GM12878 (cell line): ENCODE measurements at regions of chr10 and their contacts with region 1.

Region 1: GRCh38 chr10:93376372-93377293 is 105.5 kb downstream of the MYOF start:
- DNase-seq: peak; percentile 31
- ATAC-seq: peak; percentile 93
- H3K4me3 ChIP-seq: no peak overlapping the region
- H3K27ac ChIP-seq: no peak overlapping the region
- H3K4me1 ChIP-seq: no peaks in the 10 kb centered on the region
- H3K27me3 ChIP-seq: peaks cover 0 to 2% of the 10 kb centered on the region in 2 experiments; a peak in 1 of 4 replicates
- CTCF ChIP-seq: peak; percentile 87 to 93 (median 92); a peak in 5 of 6 replicates
- EP300 ChIP-seq: no peak
- POLR2A ChIP-seq: no peak
- RAD21 ChIP-seq: peak; percentile 99

Region 2: DNA sequence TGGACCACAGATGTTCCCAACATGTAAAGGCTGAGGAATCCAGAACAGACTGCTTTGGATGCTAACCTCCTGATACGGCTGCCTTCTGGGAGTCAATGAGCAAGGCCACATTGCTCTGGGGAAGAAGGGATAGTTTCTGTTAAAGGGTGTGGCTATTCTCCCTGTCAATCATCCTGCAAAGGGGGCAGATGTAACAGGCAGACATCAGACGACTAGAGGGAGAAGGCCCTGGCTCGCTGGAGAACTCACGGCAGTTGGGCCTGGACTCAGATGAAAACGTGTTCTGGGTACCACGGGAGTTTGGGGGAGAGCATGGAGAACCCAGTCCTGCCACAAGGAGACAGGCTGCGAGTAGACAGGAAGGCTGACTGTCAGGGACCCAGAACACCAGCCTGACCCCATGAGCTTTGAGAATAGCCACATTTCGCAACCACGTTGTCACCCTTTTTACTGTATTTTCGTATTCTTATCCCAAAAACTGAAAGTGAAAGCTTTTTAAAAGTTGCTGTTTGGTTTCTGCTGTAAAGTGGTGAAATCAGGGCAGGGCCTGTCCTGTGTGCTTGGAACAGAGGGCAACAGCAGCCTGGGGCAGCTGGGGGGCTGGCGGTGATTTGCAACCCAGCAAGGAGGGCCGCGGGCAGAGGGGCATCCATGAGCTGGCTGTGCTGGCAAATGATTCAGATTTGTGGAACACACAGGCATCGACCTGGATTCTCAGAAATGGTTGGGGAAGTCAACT is 10.2 kb after region 1 on chr10:
- CTCF ChIA-PET with region 1: interaction called, 14 read pairs
- POLR2A ChIA-PET with region 1: no interaction called
- RAD21 ChIA-PET with region 1: no interaction called
- SMC1A ChIA-PET with region 1: interaction called, 22 read pairs
- in situ Hi-C with region 1: no loop called
- intact Hi-C with region 1: no loop called
- DNase-seq: no peak
- ATAC-seq: no peak
- H3K4me3 ChIP-seq: no peak overlapping the region
- H3K27ac ChIP-seq: no peak overlapping the region
- H3K4me1 ChIP-seq: no peaks in the 10 kb centered on the region; the same call in 1 of the 2 replicates
- H3K27me3 ChIP-seq: no peaks in the 10 kb centered on the region
- CTCF ChIP-seq: no peak
- EP300 ChIP-seq: no peak
- POLR2A ChIP-seq: no peak
- RAD21 ChIP-seq: no peak

Region 3: DNA sequence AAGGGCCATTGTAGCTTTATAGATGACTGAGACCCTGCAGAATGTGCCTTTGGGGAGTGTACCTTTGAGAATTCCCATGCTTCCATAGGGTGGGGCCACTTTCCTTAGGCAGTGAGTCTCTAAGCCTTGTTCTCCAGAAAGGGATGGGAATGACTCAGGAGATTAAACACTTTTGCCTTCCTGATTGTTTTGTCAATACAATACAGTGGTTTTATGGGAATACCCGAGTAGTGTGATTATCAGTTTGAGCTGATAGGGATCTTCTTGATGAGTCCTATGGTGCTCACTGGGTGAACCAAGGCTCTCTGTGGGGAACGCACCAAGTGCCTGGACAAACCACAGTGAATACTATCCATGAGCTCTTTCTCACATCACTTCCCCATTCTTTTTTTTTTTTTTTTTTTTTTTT is 99.2 kb after region 1 on chr10:
- CTCF ChIA-PET with region 1: interaction called, 283 read pairs
- POLR2A ChIA-PET with region 1: no interaction called
- RAD21 ChIA-PET with region 1: interaction called, 144 read pairs
- SMC1A ChIA-PET with region 1: interaction called, 157 read pairs
- in situ Hi-C with region 1: loop called (anchors 5 kb)
- intact Hi-C with region 1: no loop called
- DNase-seq: no peak
- ATAC-seq: no peak
- H3K4me3 ChIP-seq: no peak overlapping the region
- H3K27ac ChIP-seq: no peak overlapping the region
- H3K4me1 ChIP-seq: no peaks in the 10 kb centered on the region
- H3K27me3 ChIP-seq: peaks cover 0 to under 1% of the 10 kb centered on the region in 2 experiments; a peak in 3 of 4 replicates
- CTCF ChIP-seq: no peak
- EP300 ChIP-seq: no peak
- POLR2A ChIP-seq: no peak
- RAD21 ChIP-seq: no peak

Region 4: DNA sequence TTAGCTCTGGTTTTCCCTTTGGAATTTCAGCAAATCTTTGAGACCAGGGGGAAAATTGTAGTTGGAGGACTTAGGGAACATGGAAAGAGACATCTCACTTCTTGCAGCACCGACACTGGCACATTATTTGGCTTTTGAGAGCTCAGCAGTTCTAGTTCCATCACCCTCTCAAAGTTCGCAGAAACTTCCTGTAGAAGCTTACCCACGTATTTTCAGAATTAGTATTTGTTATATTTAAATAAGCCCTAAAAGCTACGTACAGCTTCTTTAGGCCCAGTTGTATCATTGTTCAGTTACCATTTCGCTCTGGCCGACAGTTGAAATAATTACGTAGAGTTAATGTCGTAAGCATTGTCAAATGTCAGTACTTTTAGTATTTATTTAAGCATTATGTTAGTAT is 133.2 kb after region 1 on chr10:
- CTCF ChIA-PET with region 1: interaction called, 232 read pairs
- POLR2A ChIA-PET with region 1: interaction called, 3 read pairs
- RAD21 ChIA-PET with region 1: interaction called, 67 read pairs
- SMC1A ChIA-PET with region 1: interaction called, 86 read pairs
- in situ Hi-C with region 1: no loop called
- intact Hi-C with region 1: loop called (anchors 1 kb)
- DNase-seq: no peak
- ATAC-seq: no peak
- H3K4me3 ChIP-seq: no peak overlapping the region
- H3K27ac ChIP-seq: no peak overlapping the region
- H3K4me1 ChIP-seq: no peaks in the 10 kb centered on the region
- H3K27me3 ChIP-seq: no peaks in the 10 kb centered on the region
- CTCF ChIP-seq: no peak
- EP300 ChIP-seq: no peak
- POLR2A ChIP-seq: no peak
- RAD21 ChIP-seq: no peak

Region 5: DNA sequence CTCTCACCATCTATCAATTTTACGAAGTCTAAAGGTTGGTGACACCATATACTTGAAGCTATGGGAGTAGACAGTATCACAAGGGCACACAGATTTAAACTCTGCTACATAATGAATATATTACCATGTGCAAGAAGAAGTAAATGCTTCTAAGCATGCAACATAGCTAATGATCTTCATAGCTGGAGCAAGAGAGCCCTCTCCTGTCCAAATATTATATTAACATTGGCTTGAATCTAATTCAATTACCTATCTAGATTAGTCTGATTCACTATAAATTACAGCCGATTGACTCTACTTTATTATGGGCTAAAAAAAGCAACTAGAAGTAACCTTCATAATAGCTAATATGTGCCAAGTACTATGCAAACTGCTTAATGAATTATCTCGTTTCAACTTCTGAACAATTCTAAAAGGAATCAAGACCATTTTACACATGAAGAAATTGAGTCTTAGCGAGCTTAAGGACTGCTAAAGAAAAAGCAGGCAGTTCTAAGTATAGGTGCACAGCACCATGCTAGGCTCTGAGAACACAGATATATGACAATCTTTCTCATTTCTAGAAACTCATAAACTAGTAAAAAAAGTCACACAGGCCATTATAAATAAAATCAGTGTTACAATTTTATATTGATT is 303.9 kb after region 1 on chr10:
- CTCF ChIA-PET with region 1: interaction called, 4 read pairs
- POLR2A ChIA-PET with region 1: no interaction called
- RAD21 ChIA-PET with region 1: no interaction called
- SMC1A ChIA-PET with region 1: interaction called, 4 read pairs
- in situ Hi-C with region 1: no loop called
- intact Hi-C with region 1: loop called (anchors 10 kb)
- DNase-seq: no peak
- ATAC-seq: peak; percentile 50
- H3K4me3 ChIP-seq: no peak overlapping the region
- H3K27ac ChIP-seq: no peak overlapping the region
- H3K4me1 ChIP-seq: no peaks in the 10 kb centered on the region
- H3K27me3 ChIP-seq: no peaks in the 10 kb centered on the region
- CTCF ChIP-seq: peak in 2 of 3 experiments; percentile 17 to 53; a peak in 2 of 6 replicates
- EP300 ChIP-seq: no peak
- POLR2A ChIP-seq: no peak
- RAD21 ChIP-seq: peak; percentile 52

Region 6: DNA sequence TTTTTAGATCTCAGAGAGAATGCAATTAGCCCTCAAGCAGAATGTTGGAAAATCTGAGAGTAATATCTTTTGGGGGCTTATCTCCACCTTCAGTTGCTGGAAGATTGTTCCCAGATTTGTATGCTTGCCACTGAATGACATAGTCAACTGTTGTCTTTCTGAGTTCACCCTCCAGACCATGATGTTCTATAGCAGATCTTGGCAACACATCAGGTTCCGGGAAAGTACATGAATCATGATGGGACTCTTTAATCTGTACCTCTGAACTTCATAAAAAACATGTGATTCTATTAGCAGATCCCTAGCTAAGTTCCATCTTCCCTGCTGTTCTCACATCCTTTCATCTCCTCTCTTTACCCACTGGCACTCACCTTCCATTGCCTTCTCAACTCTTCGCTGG is 686.0 kb after region 1 on chr10:
- CTCF ChIA-PET with region 1: no interaction called
- POLR2A ChIA-PET with region 1: no interaction called
- RAD21 ChIA-PET with region 1: no interaction called
- SMC1A ChIA-PET with region 1: no interaction called
- in situ Hi-C with region 1: no loop called
- intact Hi-C with region 1: no loop called
- DNase-seq: no peak
- ATAC-seq: no peak
- H3K4me3 ChIP-seq: no peak overlapping the region
- H3K27ac ChIP-seq: no peak overlapping the region
- H3K4me1 ChIP-seq: no peaks in the 10 kb centered on the region
- H3K27me3 ChIP-seq: no peaks in the 10 kb centered on the region
- CTCF ChIP-seq: no peak
- EP300 ChIP-seq: no peak
- POLR2A ChIP-seq: no peak
- RAD21 ChIP-seq: no peak